ENCODE measurements at regions of chr12 and their contacts with region 1.

Region 1: GRCh38 chr12:34218165-34219045 is 196.1 kb downstream of the ALG10 start:
- DNase-seq: peak; percentile 45
- H3K4me3 Mint-ChIP-seq: peak overlapping the region; percentile 87
- H3K27ac Mint-ChIP-seq: peak overlapping the region; percentile 35
- H3K4me1 Mint-ChIP-seq: peaks cover 7% of the 10 kb centered on the region
- H3K27me3 Mint-ChIP-seq: peaks cover 4% of the 10 kb centered on the region

Region 2: DNA sequence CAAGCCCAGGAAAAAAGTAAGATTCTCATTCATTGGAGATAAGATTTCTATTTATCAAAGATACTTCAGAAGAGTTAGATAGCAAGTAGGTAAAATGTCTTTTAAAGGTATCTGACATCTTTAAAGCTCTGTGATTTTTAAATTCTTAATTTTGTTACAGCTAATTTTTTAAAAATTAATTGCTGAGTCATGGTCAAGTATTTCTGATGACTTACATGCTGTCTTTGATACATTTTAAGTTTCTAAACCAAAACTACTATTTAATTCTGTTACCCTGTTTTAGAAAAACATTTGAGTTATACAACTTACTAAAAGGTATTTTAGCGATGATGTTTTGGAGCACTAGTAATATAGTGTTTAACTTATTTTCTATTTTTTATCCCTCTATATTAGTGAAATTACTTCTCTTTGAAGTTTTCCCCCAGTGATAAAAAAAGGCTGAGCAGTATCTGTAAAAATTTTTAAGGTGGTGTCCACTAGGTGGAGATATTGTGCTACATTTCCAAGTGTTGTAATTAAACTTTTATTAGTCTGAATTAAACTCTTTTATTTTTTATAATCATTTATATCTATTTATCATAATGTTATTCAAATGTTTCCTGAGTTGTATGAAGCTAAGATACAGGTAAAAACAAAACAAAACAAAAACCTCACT is 184.7 kb before region 1 on chr12:
- intact Hi-C with region 1: loop called (anchors 1 kb)
- DNase-seq: no peak
- H3K4me3 Mint-ChIP-seq: no peak overlapping the region
- H3K27ac Mint-ChIP-seq: no peak overlapping the region
- H3K4me1 Mint-ChIP-seq: no peaks in the 10 kb centered on the region
- H3K27me3 Mint-ChIP-seq: no peaks in the 10 kb centered on the region

Region 3: DNA sequence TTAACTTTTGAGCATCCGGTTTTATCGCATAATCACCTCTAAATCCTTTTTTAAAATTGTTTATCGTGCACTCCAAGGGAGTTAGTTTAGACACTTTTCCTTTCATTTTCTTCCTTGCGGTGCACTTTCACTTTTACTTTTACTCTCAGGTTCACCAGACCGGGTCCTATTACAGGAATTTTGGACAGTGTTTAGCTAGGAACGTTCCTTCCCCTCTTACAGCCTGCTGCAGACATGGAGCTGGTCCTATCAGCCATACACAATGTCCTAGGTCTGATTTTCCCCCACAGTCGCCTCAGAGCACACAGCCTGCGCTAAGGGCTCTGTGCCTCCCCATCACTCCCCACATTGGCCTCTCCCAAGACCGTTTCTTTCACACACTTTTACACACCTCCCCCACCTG is 92.2 kb before region 1 on chr12:
- intact Hi-C with region 1: loop called (anchors 1 kb)
- DNase-seq: no peak
- H3K4me3 Mint-ChIP-seq: peak overlapping the region; percentile 49
- H3K27ac Mint-ChIP-seq: peak overlapping the region; percentile 55
- H3K4me1 Mint-ChIP-seq: peaks cover 13% of the 10 kb centered on the region
- H3K27me3 Mint-ChIP-seq: peaks cover 4% of the 10 kb centered on the region

Region 4: GRCh38 chr12:34390846-34391700 is 172.7 kb after region 1 on chr12:
- intact Hi-C with region 1: no loop called
- DNase-seq: no peak
- H3K4me3 Mint-ChIP-seq: no peak overlapping the region
- H3K27ac Mint-ChIP-seq: no peak overlapping the region
- H3K4me1 Mint-ChIP-seq: no peaks in the 10 kb centered on the region
- H3K27me3 Mint-ChIP-seq: no peaks in the 10 kb centered on the region

Measured in activated T-helper 1 cell treated with anti-CD3 and anti-CD28 coated beads, Interleukin-12 subunit alpha, Interleukin-12 subunit beta, Interleukin-2, Interleukin-4 antibody, amounts not matched to agents 30 ng/mL and 10 ng/mL and 1 ng/mL, durations not matched to agents 14 hours and 24 hours and 36 hours (primary cell).